Aorta (tissue), 5 donors: ENCODE measurements at regions of chr9 and their contacts with region 1.

Region 1: GRCh38 chr9:34637356-34638137 is at the start of gene SIGMAR1:
- DNase-seq: peak; percentile 97 to 98
- ATAC-seq: peak; percentile 98
- H3K4me3 ChIP-seq: peak within 1 kb of the TSS; percentile 19 to 49
- H3K27ac ChIP-seq: peak within 1 kb of the TSS; percentile 6 to 30
- H3K4me1 ChIP-seq: no peaks in the 10 kb centered on the region
- H3K27me3 ChIP-seq: no peaks in the 10 kb centered on the region
- total RNA-seq, gene SIGMAR1: 31.8 to 42.9 TPM

Region 2: DNA sequence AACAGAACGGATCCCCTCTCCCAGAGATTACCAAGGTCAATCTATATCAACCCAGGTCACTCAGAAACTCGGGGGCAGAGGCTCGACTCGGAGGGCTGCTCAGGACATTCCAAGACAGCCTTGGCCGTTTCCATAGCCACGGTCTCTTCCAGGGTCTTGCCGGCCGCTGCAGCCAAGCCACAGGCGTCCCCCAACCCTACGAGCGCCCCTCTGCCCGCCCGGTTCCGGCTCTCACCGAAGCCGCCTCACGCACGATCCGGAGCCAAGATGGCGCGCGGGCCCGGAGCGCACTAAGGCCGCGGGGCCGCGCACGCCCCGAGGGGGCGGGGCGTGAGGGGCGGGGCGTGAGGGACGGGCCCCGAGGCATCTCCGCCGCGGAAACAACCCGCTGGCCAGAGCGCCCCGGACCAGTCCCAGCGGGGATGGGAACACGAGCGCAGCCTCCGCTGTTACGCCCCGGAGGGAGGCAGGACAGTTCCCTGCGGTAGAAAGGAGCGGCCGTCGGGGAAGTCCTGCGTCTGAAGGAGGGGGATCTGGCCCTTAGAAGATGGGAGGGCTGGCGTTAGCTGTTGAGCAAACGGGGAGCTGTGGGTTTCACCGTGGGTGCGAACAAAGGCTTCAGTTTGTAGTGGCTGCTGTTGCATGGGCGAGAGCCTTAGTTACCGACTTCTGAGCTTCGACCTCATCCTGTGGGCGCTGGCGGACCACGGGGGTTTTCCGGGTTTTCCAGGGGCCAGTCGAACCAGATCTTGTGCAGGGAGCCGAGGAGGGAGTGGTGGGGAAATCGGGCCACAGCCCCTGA is 25.5 kb before region 1 on chr9 and contains the start of gene RPP25L:
- intact Hi-C with region 1: loop called in 1 of 2 experiments (anchors 2 kb)
- DNase-seq: peak; percentile 91 to 95
- ATAC-seq: peak; percentile 98
- H3K4me3 ChIP-seq: peak within 1 kb of the TSS; percentile 41 to 53
- H3K27ac ChIP-seq: peak within 1 kb of the TSS in 1 of 2 donors; percentile 9
- H3K4me1 ChIP-seq: no peaks in the 10 kb centered on the region
- H3K27me3 ChIP-seq: no peaks in the 10 kb centered on the region
- total RNA-seq, gene RPP25L: 6.0 to 9.8 TPM